Ascending aorta (tissue), 2 donors: ENCODE measurements at regions of chr17 and their contacts with region 1.

Region 1: GRCh38 chr17:38729886-38730525 is at the start of gene CISD3:
- DNase-seq: peak in 1 of 2 donors; percentile 91
- H3K4me3 ChIP-seq: peak within 1 kb of the TSS; percentile 89 to 93
- H3K27ac ChIP-seq: peak within 1 kb of the TSS; percentile 86 to 89
- H3K4me1 ChIP-seq: peaks cover 5 to 20% of the 10 kb centered on the region in 2 donors
- H3K27me3 ChIP-seq: no peaks in the 10 kb centered on the region
- CTCF ChIP-seq: peak; percentile 19 to 98 (median 47)
- total RNA-seq, gene CISD3: 27.6 TPM

Region 2: GRCh38 chr17:38674749-38675615 is 55.0 kb before region 1 on chr17 and contains the start of gene EPOP:
- intact Hi-C with region 1: loop called (anchors 5 kb)
- DNase-seq: peak; percentile 65 to 91
- H3K4me3 ChIP-seq: peak within 1 kb of the TSS; percentile 70
- H3K27ac ChIP-seq: no peak within 1 kb of the TSS
- H3K4me1 ChIP-seq: peaks cover 10 to 18% of the 10 kb centered on the region in 2 donors
- H3K27me3 ChIP-seq: peaks cover 20% of the 10 kb centered on the region
- CTCF ChIP-seq: no peak
- total RNA-seq, gene EPOP: 2.1 TPM

Region 3: GRCh38 chr17:38702166-38702899 is 27.7 kb before region 1 on chr17:
- intact Hi-C with region 1: loop called (anchors 1 kb)
- DNase-seq: peak; percentile 59 to 94
- H3K4me3 ChIP-seq: peak overlapping the region; percentile 97 to 98
- H3K27ac ChIP-seq: peak overlapping the region; percentile 93 to 98
- H3K4me1 ChIP-seq: peaks cover 4 to 17% of the 10 kb centered on the region in 2 donors
- H3K27me3 ChIP-seq: no peaks in the 10 kb centered on the region
- CTCF ChIP-seq: no peak